Mammary epithelial cell (primary cell): ENCODE measurements at regions of chr11 and their contacts with region 1.

Region 1: DNA sequence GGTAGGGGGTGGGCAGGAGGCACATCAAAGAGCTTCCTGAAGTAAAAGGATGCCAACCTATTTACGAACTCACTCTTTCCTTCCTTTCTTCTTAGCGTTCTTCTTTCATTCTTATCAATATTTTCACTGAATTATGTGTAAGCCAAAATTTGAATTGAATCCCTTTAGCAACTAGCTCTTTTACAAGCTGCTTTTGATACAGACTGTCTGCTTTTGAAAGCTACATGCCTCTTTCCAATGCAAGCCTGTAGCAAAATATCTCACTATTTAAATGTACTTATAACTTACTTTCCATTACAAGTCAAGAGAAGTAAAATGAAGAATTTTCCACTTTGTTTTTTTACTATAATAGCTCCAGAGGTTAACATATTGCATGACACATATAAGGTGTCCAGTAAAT is 186.6 kb downstream of the NXPE2 start:
- DNase-seq: no peak
- H3K4me3 ChIP-seq: no peak overlapping the region
- H3K27ac ChIP-seq: no peak overlapping the region
- H3K4me1 ChIP-seq: no peaks in the 10 kb centered on the region
- H3K27me3 ChIP-seq: no peaks in the 10 kb centered on the region
- CTCF ChIP-seq: no peak

Region 2: GRCh38 chr11:115042002-115042401 is 177.1 kb after region 1 on chr11:
- CTCF ChIA-PET with region 1: no interaction called
- dilution Hi-C with region 1: loop called (anchors 10 kb)
- in situ Hi-C with region 1: no loop called
- intact Hi-C with region 1: no loop called
- DNase-seq: no peak
- H3K4me3 ChIP-seq: no peak overlapping the region
- H3K27ac ChIP-seq: no peak overlapping the region
- H3K4me1 ChIP-seq: no peaks in the 10 kb centered on the region
- H3K27me3 ChIP-seq: no peaks in the 10 kb centered on the region
- CTCF ChIP-seq: no peak